Gastrocnemius medialis (tissue), 4 donors: ENCODE measurements at regions of chr12 and their contacts with region 1.

Region 1: DNA sequence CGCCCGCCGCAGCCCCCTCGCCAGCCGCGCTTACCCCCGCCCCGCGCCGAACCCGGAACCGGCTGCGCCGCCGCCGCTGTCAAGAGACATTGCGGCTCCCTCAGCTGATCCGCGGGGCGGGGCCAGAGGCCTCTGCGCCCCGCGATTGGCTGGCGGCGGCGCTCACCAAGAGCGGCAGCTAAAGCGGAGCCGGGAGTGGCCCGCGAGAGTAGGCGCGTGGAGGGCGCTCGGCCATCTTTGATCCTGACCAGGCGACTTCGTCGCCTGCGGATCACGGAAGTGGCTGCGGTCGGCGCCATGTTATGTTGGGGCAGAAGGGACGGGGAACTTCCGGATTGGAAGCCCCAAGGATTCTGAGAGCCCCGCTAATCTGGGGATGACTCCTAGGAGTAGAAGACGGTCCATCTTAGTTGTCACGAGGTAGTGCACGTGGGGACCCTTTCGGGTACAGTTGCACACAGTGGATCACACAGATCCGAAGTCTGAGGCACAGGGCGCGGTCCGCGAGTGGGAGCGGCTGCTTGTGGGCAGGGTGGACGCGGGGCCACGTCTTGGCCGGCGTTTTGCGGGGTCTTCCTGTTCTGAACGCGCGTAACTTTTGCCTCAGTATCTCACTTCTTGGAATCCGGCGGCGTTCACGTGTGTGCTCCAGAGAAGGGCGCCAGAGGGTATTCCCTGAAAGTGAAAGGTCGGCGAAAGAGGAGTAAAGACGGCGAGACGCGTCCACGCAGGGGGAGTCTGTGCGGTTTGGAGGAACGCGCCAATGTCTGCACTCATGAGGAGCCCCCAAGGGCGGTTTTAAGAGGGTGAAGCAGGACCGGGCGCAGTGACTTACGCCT is at the start of gene CHFR:
- DNase-seq: peak; percentile 84 to 91
- ATAC-seq: peak; percentile 97
- H3K4me3 ChIP-seq: peak within 1 kb of the TSS; percentile 73 to 91 (median 84)
- H3K27ac ChIP-seq: peak within 1 kb of the TSS; percentile 85 to 93 (median 91)
- H3K4me1 ChIP-seq: peaks cover 4 to 7% of the 10 kb centered on the region in 2 donors
- H3K27me3 ChIP-seq: no peaks in the 10 kb centered on the region
- CTCF ChIP-seq: no peak
- POLR2A ChIP-seq: peak; percentile 44 to 54
- total RNA-seq, gene CHFR: 10.8 to 19.6 (median 12.1) TPM

Region 2: GRCh38 chr12:132828706-132829534 is 58.8 kb before region 1 on chr12 and contains the start of gene GOLGA3:
- in situ Hi-C with region 1: no loop called
- intact Hi-C with region 1: loop called (anchors 5 kb)
- DNase-seq: peak; percentile 85 to 88
- ATAC-seq: peak; percentile 97 to 98
- H3K4me3 ChIP-seq: peak within 1 kb of the TSS; percentile 78 to 87 (median 84)
- H3K27ac ChIP-seq: peak within 1 kb of the TSS; percentile 92 to 100 (median 97)
- H3K4me1 ChIP-seq: peaks cover 15 to 22% of the 10 kb centered on the region in 2 donors
- H3K27me3 ChIP-seq: no peaks in the 10 kb centered on the region
- CTCF ChIP-seq: peak in 1 of 5 experiments; percentile 20
- POLR2A ChIP-seq: peak; percentile 40 to 54
- total RNA-seq, gene GOLGA3: 30.0 to 50.0 (median 39.6) TPM

Region 3: DNA sequence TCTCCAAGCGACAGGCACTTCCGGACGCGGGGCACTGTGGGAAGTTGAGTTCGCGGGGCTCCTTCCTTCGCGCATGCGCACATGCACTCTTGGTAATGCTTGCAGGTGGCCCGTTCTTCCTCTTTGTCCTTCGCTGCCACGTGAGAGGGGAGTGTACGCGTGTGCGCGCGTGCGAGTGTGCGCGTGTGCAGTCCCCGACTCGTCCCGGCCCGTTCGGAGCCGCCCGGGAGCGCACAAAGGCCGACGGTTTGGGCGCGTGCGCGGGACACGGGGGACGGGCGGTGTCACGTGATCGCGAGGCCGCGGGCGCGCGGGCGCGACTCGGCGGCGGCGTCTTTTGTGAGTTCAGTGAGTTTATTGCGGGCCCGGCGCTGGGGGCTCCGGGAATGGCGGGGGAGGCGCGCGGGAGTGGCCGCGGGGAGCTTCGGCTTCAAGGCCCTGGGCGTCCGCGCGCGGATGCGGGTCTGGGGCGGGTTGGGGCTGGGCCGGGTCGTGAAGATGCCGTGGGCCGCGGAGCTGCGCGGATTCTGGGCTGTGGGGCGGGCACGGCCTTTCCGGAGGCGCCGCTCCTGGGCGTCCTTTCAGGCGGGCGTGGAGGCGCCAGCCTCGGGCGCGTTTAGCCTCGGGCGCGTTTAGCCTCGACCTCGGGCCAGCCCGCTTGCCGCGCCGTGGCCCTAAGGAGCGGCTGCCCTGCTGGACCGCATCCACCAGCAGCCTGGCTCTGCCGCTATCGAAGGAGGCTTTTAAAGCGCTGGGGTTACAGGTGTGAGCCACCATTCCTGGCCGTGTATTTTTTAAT is 149.7 kb after region 1 on chr12 and contains the start of gene ZNF84:
- in situ Hi-C with region 1: no loop called
- intact Hi-C with region 1: loop called (anchors 1 kb)
- DNase-seq: peak; percentile 93 to 94
- ATAC-seq: peak; percentile 96 to 99
- H3K4me3 ChIP-seq: peak within 1 kb of the TSS; percentile 74 to 90 (median 80)
- H3K27ac ChIP-seq: peak within 1 kb of the TSS; percentile 83 to 97 (median 91)
- H3K4me1 ChIP-seq: peaks cover 11 to 12% of the 10 kb centered on the region in 2 donors
- H3K27me3 ChIP-seq: no peaks in the 10 kb centered on the region
- CTCF ChIP-seq: peak in 2 of 5 experiments; percentile 23 to 47
- POLR2A ChIP-seq: peak; percentile 60 to 61
- total RNA-seq, gene ZNF84: 5.3 to 20.9 (median 13.5) TPM